ENCODE measurements at regions of chr11 and their contacts with region 1.

Region 1: GRCh38 chr11:82900277-82901164 is at the start of gene PRCP:
- DNase-seq: peak; percentile 82 to 95 (median 91)
- ATAC-seq: peak; percentile 71 to 76
- H3K4me3 Mint-ChIP-seq: peak within 1 kb of the TSS; percentile 90 to 100 (median 100)
- H3K27ac Mint-ChIP-seq: peak within 1 kb of the TSS; percentile 92 to 100 (median 100)
- H3K4me1 Mint-ChIP-seq: peaks cover 26 to 55% (median 49%) of the 10 kb centered on the region in 4 donors
- H3K27me3 Mint-ChIP-seq: no peaks in the 10 kb centered on the region
- polyA plus RNA-seq, gene PRCP: 48.3 to 50.2 (median 49.3) TPM

Region 2: DNA sequence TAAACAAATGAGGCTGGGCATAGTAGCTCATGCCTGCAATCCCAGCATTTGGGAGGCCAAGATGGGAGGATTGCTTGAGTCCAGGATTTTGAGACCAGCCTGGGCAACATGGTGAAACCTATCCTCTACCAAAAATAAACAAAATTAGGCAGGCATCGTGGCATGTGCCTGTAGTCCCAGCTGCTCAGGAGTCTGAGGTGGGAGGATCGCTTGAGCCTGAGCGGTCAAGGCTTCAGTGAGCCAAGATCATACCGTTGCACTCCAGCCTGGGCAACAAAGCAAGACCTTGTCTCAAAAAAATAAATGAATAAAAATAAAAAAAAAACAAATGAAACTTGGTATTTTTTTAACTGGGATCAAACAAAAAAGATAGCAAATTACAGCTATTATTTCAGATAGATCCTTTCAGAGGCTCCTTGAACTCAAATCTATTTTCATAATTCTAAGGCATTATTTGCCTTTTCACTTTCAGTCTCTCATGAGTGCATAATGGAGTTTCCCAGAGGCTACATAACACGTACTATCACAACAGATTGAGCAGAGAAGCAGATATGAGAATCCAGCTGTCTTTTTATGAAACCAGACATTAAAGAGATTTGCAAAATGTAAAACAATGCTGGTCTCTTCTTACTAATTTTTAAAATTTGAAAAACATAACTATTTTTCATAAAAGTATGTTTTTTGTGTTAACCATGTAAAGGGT is 24.2 kb after region 1 on chr11:
- POLR2A ChIA-PET with region 1: interaction called, 15 read pairs
- DNase-seq: no peak
- ATAC-seq: no peak
- H3K4me3 Mint-ChIP-seq: no peak overlapping the region
- H3K27ac Mint-ChIP-seq: peak overlapping the region in 1 of 10 donors; percentile 2
- H3K4me1 Mint-ChIP-seq: peaks cover 24 to 62% (median 52%) of the 10 kb centered on the region in 4 donors
- H3K27me3 Mint-ChIP-seq: no peaks in the 10 kb centered on the region

Region 3: GRCh38 chr11:82988936-82989627 is 88.6 kb after region 1 on chr11:
- POLR2A ChIA-PET with region 1: interaction called, 10 read pairs
- DNase-seq: no peak
- ATAC-seq: no peak
- H3K4me3 Mint-ChIP-seq: no peak overlapping the region
- H3K27ac Mint-ChIP-seq: peak overlapping the region in 5 of 10 donors; percentile 8 to 76 (median 48)
- H3K4me1 Mint-ChIP-seq: peaks cover 11 to 33% (median 29%) of the 10 kb centered on the region in 4 donors
- H3K27me3 Mint-ChIP-seq: no peaks in the 10 kb centered on the region

Region 4: DNA sequence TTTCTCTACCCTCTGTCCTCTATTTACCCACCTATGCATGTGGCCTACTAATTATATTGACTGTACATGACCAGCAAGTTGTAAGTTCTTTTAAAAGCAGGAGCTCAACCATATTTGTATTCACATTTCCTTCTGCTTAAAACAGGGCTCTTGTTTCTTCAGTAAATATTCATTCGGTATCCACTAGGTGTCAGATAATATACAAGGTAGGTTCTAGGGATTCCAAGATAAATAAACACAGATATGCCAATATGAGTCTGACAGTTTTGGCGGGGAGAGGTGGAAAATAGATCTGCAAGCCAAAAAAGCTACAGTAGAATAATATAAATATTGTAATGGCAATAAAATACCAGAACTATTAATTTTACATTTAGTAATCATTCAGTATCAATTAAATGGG is 186.5 kb after region 1 on chr11:
- POLR2A ChIA-PET with region 1: no interaction called
- DNase-seq: no peak
- ATAC-seq: peak in 1 of 2 donors; percentile 42
- H3K4me3 Mint-ChIP-seq: no peak overlapping the region
- H3K27ac Mint-ChIP-seq: peak overlapping the region; percentile 1 to 74 (median 49)
- H3K4me1 Mint-ChIP-seq: peaks cover 11 to 31% (median 20%) of the 10 kb centered on the region in 4 donors
- H3K27me3 Mint-ChIP-seq: no peaks in the 10 kb centered on the region

Region 5: DNA sequence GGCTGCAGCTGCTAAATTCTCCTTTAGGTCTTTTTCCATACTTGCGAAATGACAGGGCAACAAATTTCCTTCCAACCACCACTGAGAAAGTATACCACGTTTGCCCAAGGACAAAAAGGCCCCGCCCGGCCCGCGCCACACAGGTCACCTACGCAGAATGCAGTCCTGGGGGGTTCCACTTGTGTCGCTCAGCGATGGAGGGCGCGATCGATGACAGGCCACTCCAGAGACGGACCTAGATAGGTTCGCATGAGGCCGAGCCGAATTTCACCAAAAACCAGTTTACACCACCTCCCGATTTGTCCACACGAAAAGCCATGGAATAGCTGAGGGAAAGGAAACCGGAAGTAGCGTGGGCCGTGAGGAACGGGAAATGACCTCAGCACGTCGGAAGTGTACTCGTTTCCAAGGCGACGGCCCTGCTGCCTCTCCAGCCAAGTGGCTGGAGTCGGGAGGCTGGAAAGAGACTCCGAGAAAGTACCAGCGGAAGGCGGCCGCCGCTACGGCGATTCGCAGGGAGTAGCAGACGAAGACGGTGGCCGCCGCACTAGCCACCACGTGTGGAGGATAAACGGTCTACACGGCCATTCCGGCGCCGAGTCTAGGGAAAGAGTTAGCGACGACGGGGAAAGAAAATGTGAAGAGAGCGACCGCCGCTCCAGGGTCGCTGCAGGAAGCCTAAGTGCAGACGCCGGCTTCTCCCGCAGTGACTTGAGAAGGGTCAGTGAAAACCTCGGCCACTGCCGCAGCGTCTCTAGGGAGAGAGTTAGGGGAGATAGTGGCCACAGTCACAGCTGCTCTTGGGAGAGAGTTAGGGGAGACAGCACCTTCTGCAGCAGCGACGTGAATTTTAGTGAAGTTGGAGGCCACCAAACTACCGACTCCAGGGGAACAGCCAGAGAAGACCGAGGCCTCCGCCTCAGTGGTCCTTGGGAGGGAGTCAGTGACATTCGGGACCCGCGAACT is 293.1 kb after region 1 on chr11 and contains the start of gene ANKRD42:
- POLR2A ChIA-PET with region 1: interaction called, 20 read pairs
- DNase-seq: peak; percentile 69 to 93 (median 86)
- ATAC-seq: peak; percentile 72 to 76
- H3K4me3 Mint-ChIP-seq: peak within 1 kb of the TSS; percentile 93 to 100 (median 100)
- H3K27ac Mint-ChIP-seq: peak within 1 kb of the TSS; percentile 94 to 100 (median 100)
- H3K4me1 Mint-ChIP-seq: peaks cover 28 to 54% (median 51%) of the 10 kb centered on the region in 4 donors
- H3K27me3 Mint-ChIP-seq: no peaks in the 10 kb centered on the region
- polyA plus RNA-seq, gene ANKRD42: 3.4 to 6.5 (median 5.5) TPM

Measured in naive thymus-derived CD8-positive, alpha-beta T cell (primary cell).